K562 (cell line): ENCODE measurements at regions of chr5 and their contacts with region 1.

Region 1: GRCh38 chr5:80093796-80094195 is 58.6 kb downstream of the THBS4 start:
- DNase-seq: peak in 1 of 4 experiments; percentile 21
- ATAC-seq: peak; percentile 57
- H3K4me3 ChIP-seq: no peak overlapping the region
- H3K27ac ChIP-seq: no peak overlapping the region
- H3K4me1 ChIP-seq: no peaks in the 10 kb centered on the region
- H3K27me3 ChIP-seq: peaks cover 0 to 8% of the 10 kb centered on the region in 2 experiments; a peak in 3 of 5 replicates
- CTCF ChIP-seq: no peak
- EP300 ChIP-seq: no peak
- POLR2A ChIP-seq: no peak
- RAD21 ChIP-seq: no peak

Region 2: DNA sequence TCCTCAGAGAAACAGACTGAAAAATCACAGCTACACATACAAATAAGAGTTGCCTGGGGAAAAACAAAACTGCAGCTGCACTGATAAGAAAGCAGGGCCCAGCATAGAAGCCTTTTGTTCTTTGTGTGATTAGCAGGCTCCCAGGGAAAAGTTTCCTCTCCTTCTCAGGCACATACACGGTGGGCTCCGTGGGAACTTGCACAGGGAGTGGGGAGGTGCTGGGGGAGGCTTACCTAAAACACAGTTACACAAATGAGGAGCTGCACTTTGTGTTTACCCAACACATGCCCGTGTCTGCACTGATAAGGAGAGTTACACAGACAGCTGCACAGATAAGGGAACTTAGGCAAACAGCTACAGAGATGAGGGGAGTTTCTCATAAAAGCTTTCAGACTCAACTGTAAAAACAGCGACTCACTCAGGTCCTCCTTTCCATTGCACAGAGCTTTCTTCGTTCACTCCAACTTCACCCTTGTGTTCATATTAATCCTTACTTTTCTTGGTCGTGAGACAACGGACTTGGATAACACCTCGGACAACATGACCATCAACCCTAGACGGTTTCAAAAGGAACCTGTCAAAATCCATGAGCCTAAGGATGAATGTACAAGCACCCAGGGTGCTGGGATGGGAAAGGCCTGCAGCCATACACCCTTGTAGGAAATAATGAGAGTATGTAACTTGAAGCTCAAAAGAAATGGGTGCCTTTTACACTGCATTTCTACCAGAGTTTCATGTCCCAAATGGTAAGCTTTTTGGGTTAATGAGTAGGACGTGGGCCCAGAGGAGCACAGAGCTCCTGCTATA is 111.2 kb after region 1 on chr5:
- CTCF ChIA-PET with region 1: no interaction called
- POLR2A ChIA-PET with region 1: interaction called, 4 read pairs
- in situ Hi-C with region 1: no loop called
- intact Hi-C with region 1: loop called (anchors 2 kb)
- DNase-seq: peak; percentile 54 to 83 (median 62)
- ATAC-seq: peak; percentile 98
- H3K4me3 ChIP-seq: no peak overlapping the region
- H3K27ac ChIP-seq: peak overlapping the region; percentile 1; the same call in 1 of the 3 replicates
- H3K4me1 ChIP-seq: peaks cover 5 to 15% of the 10 kb centered on the region in 2 experiments; a peak in 3 of 5 replicates
- H3K27me3 ChIP-seq: no peaks in the 10 kb centered on the region; a peak in 1 of 5 replicates
- CTCF ChIP-seq: peak; percentile 49 to 53 (median 51)
- EP300 ChIP-seq: peak; percentile 95
- POLR2A ChIP-seq: no peak
- RAD21 ChIP-seq: peak; percentile 54 to 66

Region 3: GRCh38 chr5:80296121-80296520 is 202.3 kb after region 1 on chr5:
- CTCF ChIA-PET with region 1: interaction called, 4 read pairs
- POLR2A ChIA-PET with region 1: no interaction called
- in situ Hi-C with region 1: loop called (anchors 5 kb)
- intact Hi-C with region 1: no loop called
- DNase-seq: no peak
- ATAC-seq: no peak
- H3K4me3 ChIP-seq: no peak overlapping the region
- H3K27ac ChIP-seq: no peak overlapping the region
- H3K4me1 ChIP-seq: no peaks in the 10 kb centered on the region; a peak in 1 of 5 replicates
- H3K27me3 ChIP-seq: peaks cover 25 to 37% of the 10 kb centered on the region in 2 experiments
- CTCF ChIP-seq: no peak
- EP300 ChIP-seq: no peak
- POLR2A ChIP-seq: no peak
- RAD21 ChIP-seq: no peak

Region 4: DNA sequence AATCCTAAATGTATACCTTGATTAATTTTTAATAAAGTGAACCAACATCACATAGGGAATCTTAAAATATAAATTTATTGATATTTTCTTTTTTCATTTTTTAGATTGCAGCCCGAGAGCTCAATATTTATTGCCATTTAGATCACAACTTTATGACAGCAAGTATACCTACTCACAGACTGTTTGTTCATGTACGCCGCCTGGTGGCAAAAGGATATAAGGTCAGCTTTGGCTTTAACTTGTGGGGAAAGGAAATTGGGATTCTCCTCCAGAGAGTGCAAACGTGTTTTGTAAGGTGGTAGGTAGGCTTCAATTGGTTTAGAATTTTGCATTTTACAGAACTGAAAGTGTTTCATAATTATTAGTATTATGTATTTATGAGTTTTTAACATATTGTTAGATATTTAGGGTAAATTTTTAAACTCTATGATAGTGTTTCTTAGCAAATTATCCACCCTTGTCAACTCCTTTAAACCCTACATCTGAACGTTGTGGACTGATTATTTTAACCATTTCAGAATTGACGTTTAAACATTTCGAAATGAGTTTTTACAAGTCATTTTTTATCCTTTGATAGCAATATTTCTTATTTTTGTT is 578.4 kb after region 1 on chr5:
- CTCF ChIA-PET with region 1: interaction called, 6 read pairs
- POLR2A ChIA-PET with region 1: no interaction called
- in situ Hi-C with region 1: loop called (anchors 10 kb)
- intact Hi-C with region 1: loop called (anchors 5 kb)
- DNase-seq: peak; percentile 56 to 82 (median 63)
- ATAC-seq: peak; percentile 95
- H3K4me3 ChIP-seq: no peak overlapping the region
- H3K27ac ChIP-seq: no peak overlapping the region
- H3K4me1 ChIP-seq: peaks cover 0 to 5% of the 10 kb centered on the region in 2 experiments; a peak in 1 of 5 replicates
- H3K27me3 ChIP-seq: no peaks in the 10 kb centered on the region
- CTCF ChIP-seq: peak; percentile 69 to 80 (median 73)
- EP300 ChIP-seq: no peak
- POLR2A ChIP-seq: no peak
- RAD21 ChIP-seq: peak; percentile 74 to 76